ENCODE measurements at regions of chr2 and their contacts with region 1.

Region 1: GRCh38 chr2:43139996-43140621 is 86.3 kb downstream of the ZFP36L2 start:
- DNase-seq: peak in 1 of 9 donors; percentile 39
- ATAC-seq: peak; percentile 17
- H3K4me3 ChIP-seq: peak overlapping the region; percentile 6
- H3K4me3 Mint-ChIP-seq: peak overlapping the region; percentile 41 to 86 (median 62)
- H3K27ac ChIP-seq: peak overlapping the region; percentile 96
- H3K27ac Mint-ChIP-seq: peak overlapping the region; percentile 82 to 100 (median 96)
- H3K4me1 ChIP-seq: peaks cover 61 to 83% of the 10 kb centered on the region in 2 donors
- H3K4me1 Mint-ChIP-seq: peaks cover 65 to 95% (median 78%) of the 10 kb centered on the region in 7 donors
- H3K27me3 ChIP-seq: no peaks in the 10 kb centered on the region
- H3K27me3 Mint-ChIP-seq: no peaks in the 10 kb centered on the region

Region 2: DNA sequence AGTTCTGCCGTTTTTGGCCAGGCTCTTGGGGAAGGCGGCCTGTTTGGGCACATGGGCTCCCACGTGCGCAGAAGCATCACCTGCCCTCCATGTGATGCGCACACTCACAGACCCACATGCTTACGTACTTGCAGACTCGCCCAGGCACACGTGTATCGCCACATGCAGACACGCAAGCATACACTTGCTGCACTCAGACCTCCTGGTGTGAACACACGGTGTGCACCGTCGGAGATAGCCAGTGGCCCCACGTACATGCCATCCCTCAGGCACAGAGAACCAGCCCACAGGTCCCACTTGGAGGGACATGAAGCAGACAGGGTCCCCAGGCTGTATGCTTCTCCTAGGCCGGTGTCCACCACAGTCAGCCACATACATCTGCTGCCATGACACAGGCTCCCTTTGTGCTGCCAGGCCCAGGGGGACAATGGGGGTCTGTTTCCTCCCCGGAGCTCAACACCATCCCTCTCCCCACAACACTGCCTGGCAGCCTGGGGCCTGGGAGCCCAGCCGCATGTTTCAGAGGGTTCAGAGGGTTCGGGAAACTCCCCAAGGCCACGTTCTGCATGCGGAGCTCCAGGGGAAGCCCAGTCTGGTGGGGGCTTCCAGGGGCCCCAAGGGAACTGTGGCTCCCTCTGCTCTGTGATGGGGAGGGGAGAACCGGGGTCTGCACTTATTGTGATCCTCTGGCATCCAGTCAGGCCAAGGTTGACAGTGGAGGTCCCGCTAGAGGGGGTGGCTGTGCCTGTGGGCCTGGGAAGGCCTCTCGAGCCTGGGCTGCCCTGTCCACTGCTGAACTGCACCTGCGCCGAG is 139.7 kb before region 1 on chr2:
- CTCF ChIA-PET with region 1: no interaction called
- POLR2A ChIA-PET with region 1: no interaction called
- intact Hi-C with region 1: no loop called
- DNase-seq: no peak
- ATAC-seq: no peak
- H3K4me3 ChIP-seq: no peak overlapping the region
- H3K4me3 Mint-ChIP-seq: no peak overlapping the region
- H3K27ac ChIP-seq: no peak overlapping the region
- H3K27ac Mint-ChIP-seq: no peak overlapping the region
- H3K4me1 ChIP-seq: no peaks in the 10 kb centered on the region
- H3K4me1 Mint-ChIP-seq: peaks cover 0 to 2% (median 0%) of the 10 kb centered on the region in 7 donors
- H3K27me3 ChIP-seq: no peaks in the 10 kb centered on the region
- H3K27me3 Mint-ChIP-seq: peaks cover 0 to 18% (median 0%) of the 10 kb centered on the region in 5 donors

Region 3: GRCh38 chr2:43158259-43158880 is 18.3 kb after region 1 on chr2:
- CTCF ChIA-PET with region 1: interaction called, 4 read pairs
- POLR2A ChIA-PET with region 1: interaction called, 1,274 read pairs
- intact Hi-C with region 1: loop called (anchors 1 kb)
- DNase-seq: peak in 3 of 9 donors; percentile 70 to 72 (median 71)
- ATAC-seq: peak; percentile 59
- H3K4me3 ChIP-seq: peak overlapping the region; percentile 18
- H3K4me3 Mint-ChIP-seq: peak overlapping the region; percentile 81 to 91 (median 86)
- H3K27ac ChIP-seq: peak overlapping the region; percentile 92
- H3K27ac Mint-ChIP-seq: peak overlapping the region; percentile 96 to 100 (median 99)
- H3K4me1 ChIP-seq: peaks cover 53 to 62% of the 10 kb centered on the region in 2 donors
- H3K4me1 Mint-ChIP-seq: peaks cover 47 to 95% (median 69%) of the 10 kb centered on the region in 7 donors
- H3K27me3 ChIP-seq: no peaks in the 10 kb centered on the region
- H3K27me3 Mint-ChIP-seq: no peaks in the 10 kb centered on the region

Region 4: DNA sequence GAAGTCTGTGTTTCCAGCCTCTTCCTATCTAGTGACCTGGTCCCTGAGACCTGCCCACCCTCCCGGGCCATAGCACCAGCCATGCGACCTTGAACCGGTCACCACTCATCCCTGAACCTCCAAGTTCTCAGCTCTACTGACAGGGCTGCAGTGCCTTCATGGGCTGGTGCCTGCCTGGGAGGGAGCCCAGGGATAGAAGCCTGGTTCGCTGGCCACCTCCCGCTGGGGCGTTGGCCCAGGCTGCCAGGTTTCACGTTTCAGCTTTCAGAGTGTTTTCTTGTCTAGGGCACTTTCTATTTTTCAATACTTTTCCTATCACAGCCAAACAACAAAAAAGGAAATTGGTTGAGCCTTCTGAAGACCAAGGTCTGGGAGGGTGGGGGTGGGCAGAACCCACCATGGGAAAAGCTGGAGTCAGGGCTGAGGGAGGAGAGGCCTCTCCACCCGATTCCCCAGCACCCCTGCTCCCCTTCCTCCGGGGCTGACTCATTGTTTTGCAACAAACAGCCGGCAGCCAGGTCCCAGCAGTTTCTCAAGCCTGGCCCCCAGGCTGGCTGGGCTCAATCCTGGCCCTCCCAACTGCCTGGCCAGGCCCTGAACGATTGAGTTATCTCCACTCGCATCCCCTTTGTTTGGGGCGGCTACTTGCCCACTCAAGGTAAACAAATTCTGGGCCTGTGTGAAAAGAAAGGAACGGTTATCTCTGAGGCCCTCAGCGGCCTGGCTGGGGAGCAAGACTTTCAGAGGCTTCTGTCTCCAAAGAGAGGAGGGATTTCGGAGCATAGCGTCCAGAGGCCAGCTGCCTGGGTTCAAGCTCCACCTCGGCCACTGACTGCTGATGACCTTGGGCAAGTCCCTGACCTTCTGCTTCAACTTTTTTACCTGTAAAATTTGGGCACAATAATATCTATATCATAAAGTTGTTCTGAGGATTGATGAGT is 38.8 kb after region 1 on chr2:
- CTCF ChIA-PET with region 1: interaction called, 10 read pairs
- POLR2A ChIA-PET with region 1: interaction called, 1,274 read pairs
- intact Hi-C with region 1: no loop called
- DNase-seq: peak in 1 of 9 donors; percentile 30
- ATAC-seq: no peak
- H3K4me3 ChIP-seq: peak overlapping the region; percentile 17
- H3K4me3 Mint-ChIP-seq: peak overlapping the region; percentile 53 to 79 (median 71)
- H3K27ac ChIP-seq: peak overlapping the region; percentile 66
- H3K27ac Mint-ChIP-seq: peak overlapping the region; percentile 94 to 99 (median 97)
- H3K4me1 ChIP-seq: peaks cover 49 to 70% of the 10 kb centered on the region in 2 donors
- H3K4me1 Mint-ChIP-seq: peaks cover 52 to 78% (median 75%) of the 10 kb centered on the region in 7 donors
- H3K27me3 ChIP-seq: no peaks in the 10 kb centered on the region
- H3K27me3 Mint-ChIP-seq: no peaks in the 10 kb centered on the region

Region 5: GRCh38 chr2:43219383-43220228 is 79.5 kb after region 1 on chr2:
- CTCF ChIA-PET with region 1: interaction called, 147 read pairs
- POLR2A ChIA-PET with region 1: interaction called, 1,899 read pairs
- intact Hi-C with region 1: loop called (anchors 1 kb)
- DNase-seq: peak; percentile 54 to 93 (median 87)
- ATAC-seq: peak; percentile 56
- H3K4me3 ChIP-seq: peak overlapping the region; percentile 87
- H3K4me3 Mint-ChIP-seq: peak overlapping the region; percentile 82 to 99 (median 90)
- H3K27ac ChIP-seq: peak overlapping the region; percentile 97
- H3K27ac Mint-ChIP-seq: peak overlapping the region; percentile 90 to 99 (median 97)
- H3K4me1 ChIP-seq: peaks cover 21% of the 10 kb centered on the region in 2 donors
- H3K4me1 Mint-ChIP-seq: peaks cover 34 to 51% (median 44%) of the 10 kb centered on the region in 7 donors
- H3K27me3 ChIP-seq: no peaks in the 10 kb centered on the region
- H3K27me3 Mint-ChIP-seq: peaks cover 0 to 2% (median 0%) of the 10 kb centered on the region in 5 donors

Measured in naive thymus-derived CD4-positive, alpha-beta T cell (primary cell).